Motor neuron (in vitro differentiated cells): ENCODE measurements at regions of chr4 and their contacts with region 1.

Region 1: GRCh38 chr4:17468371-17469221 is 43.3 kb downstream of the QDPR start:
- ATAC-seq: no peak
- H3K4me3 ChIP-seq: no peak overlapping the region
- H3K27ac ChIP-seq: no peak overlapping the region
- H3K4me1 ChIP-seq: peaks cover 0 to 3% of the 10 kb centered on the region in 2 donors

Region 2: DNA sequence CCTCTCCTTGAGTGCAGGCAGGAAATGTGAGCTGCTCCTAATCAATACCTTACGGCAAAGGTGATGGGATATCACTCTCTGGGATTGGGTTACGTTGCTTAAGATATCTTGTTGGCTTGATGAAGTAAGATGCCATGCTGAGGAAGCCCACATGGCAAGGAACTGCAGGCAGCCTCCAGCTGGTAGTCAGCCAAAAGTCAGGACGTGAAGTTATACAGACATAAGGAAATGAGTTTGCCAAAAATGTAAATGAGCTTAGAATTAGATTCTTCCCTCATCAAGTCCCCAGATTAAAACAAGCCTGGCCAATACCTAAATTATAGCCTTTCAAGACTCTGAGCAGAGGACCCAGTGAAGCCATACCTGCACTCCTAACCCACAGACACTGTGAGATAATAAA is 111.7 kb before region 1 on chr4:
- in situ Hi-C with region 1: loop called in 1 of 9 experiments (anchors 10 kb)
- ATAC-seq: no peak
- H3K4me3 ChIP-seq: no peak overlapping the region
- H3K27ac ChIP-seq: no peak overlapping the region
- H3K4me1 ChIP-seq: no peaks in the 10 kb centered on the region

Region 3: DNA sequence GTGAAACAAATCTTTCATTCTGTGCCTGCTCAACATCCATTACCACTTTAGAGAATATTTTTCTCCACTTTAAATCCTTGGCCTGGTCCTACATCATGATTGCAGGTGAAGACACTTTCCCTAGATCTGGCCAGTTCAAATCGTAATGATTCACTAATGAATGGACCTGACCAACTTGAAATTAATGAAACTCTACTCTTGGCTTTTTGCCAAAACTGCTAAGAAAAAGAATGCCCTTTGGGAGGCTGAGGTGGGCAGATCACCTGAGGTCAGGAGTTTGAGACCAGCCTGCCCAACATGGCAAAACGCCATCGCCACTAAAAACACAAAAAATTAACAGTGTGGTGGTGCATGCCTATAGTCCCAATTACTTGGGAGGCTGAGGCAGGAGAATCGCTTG is 1635.6 kb after region 1 on chr4:
- in situ Hi-C with region 1: no loop called
- ATAC-seq: no peak
- H3K4me3 ChIP-seq: no peak overlapping the region
- H3K27ac ChIP-seq: no peak overlapping the region
- H3K4me1 ChIP-seq: no peaks in the 10 kb centered on the region